Sigmoid colon (tissue), 7 donors: ENCODE measurements at regions of chr3 and their contacts with region 1.

Region 1: DNA sequence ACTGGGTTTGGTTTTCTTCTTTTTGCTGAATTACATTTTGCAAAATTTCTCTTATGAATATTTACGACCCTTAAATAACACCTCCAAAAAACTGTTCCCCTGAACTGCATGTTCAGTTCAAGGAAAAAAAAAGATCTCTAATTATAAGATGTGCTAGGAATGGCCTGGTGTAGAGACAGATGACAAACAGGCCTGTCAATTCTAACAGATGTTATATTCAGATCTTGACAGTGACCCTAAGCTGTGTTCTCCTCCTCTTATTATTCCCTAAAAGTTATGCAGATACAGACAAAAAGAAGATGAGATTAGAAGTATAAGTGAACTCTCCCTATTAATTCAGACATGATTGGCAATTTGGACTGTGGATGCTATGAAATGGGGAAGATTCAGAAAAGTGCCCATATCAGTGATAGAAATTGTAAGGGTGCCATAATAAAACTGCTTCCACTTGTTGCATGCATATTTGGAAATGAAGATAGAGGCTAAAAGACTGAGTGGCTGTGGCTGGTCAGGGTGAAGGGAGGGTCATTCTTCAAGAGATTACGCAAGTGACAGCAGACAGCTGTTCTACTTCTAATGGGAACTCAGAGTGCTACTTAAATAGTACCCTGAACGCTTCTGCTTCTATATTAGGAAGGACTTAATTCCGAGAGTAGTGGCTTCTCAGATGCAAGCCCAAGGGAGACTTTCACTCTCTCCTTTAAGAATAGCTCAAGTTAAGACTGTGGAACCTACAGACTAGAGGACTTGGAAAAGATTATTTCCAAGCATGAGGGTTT is 75.5 kb downstream of the ADAMTS9 start:
- DNase-seq: peak; percentile 86
- H3K4me3 ChIP-seq: peak overlapping the region in 1 of 4 donors; percentile 27
- H3K27ac ChIP-seq: peak overlapping the region; percentile 85 to 94 (median 87)
- H3K4me1 ChIP-seq: peaks cover 0 to 33% (median 23%) of the 10 kb centered on the region in 4 donors
- H3K27me3 ChIP-seq: no peaks in the 10 kb centered on the region
- CTCF ChIP-seq: no peak
- EP300 ChIP-seq: peak; percentile 86 to 97 (median 92)
- POLR2A ChIP-seq: no peak

Region 2: DNA sequence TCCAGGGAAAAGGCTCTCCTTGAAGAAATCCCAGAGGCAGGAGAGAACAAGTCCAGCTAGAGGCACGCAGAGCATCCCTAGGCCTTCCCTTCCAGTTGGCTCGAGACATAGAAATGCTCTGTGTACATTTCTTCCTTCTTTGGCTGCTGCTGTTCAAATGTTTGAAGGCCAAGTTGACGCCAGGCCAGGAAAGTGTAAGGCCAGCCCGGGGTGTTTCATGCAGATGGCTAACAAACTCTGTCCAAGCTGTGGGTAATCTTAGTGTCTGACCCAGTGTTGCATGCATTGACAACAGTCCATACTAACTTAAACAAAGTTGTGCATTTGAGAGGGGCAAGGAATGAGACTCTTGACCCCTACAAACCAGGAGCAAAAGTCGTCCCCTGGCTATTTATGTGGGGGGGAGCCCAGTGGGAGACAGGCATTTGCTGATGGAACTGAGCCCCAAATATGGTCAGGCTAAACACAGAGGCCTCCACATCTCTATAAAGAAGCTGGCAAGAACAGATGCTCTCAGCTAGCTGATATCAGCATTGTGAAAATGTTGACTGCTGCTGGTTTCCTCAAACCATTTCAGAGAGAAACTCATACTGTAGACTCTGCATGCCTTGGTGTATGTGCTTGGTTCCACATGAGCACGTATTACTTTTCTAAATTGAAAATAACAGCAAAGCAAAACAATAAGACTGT is 63.9 kb before region 1 on chr3:
- intact Hi-C with region 1: loop called (anchors 1 kb)
- DNase-seq: peak; percentile 95
- H3K4me3 ChIP-seq: no peak overlapping the region
- H3K27ac ChIP-seq: peak overlapping the region; percentile 76 to 93 (median 84)
- H3K4me1 ChIP-seq: peaks cover 0 to 50% (median 35%) of the 10 kb centered on the region in 4 donors
- H3K27me3 ChIP-seq: no peaks in the 10 kb centered on the region
- CTCF ChIP-seq: no peak
- EP300 ChIP-seq: peak in 1 of 4 donors; percentile 74
- POLR2A ChIP-seq: no peak

Region 3: GRCh38 chr3:64561325-64561843 is 50.9 kb before region 1 on chr3:
- intact Hi-C with region 1: loop called (anchors 5 kb)
- DNase-seq: peak; percentile 69
- H3K4me3 ChIP-seq: peak overlapping the region; percentile 34 to 51 (median 44)
- H3K27ac ChIP-seq: peak overlapping the region; percentile 79 to 84 (median 80)
- H3K4me1 ChIP-seq: peaks cover 0 to 35% (median 19%) of the 10 kb centered on the region in 4 donors
- H3K27me3 ChIP-seq: no peaks in the 10 kb centered on the region
- CTCF ChIP-seq: no peak
- EP300 ChIP-seq: peak in 1 of 4 donors; percentile 8
- POLR2A ChIP-seq: peak in 1 of 2 donors; percentile 16